Activated B cell treated with CpG ODN at 0.5 μM for 24 hours (primary cell): ENCODE measurements at regions of chr17 and their contacts with region 1.

Region 1: GRCh38 chr17:12545877-12546513 is 119.7 kb upstream of the MYOCD start:
- DNase-seq: no peak
- ATAC-seq: peak; percentile 78
- H3K4me3 Mint-ChIP-seq: no peak overlapping the region
- H3K27ac Mint-ChIP-seq: no peak overlapping the region
- H3K4me1 Mint-ChIP-seq: peaks cover 2% of the 10 kb centered on the region
- H3K27me3 Mint-ChIP-seq: no peaks in the 10 kb centered on the region
- CTCF ChIP-seq: no peak

Region 2: GRCh38 chr17:12342609-12343435 is 203.2 kb before region 1 on chr17:
- CTCF ChIA-PET with region 1: interaction called, 13 read pairs
- POLR2A ChIA-PET with region 1: no interaction called
- intact Hi-C with region 1: loop called (anchors 1 kb)
- DNase-seq: no peak
- ATAC-seq: peak; percentile 37
- H3K4me3 Mint-ChIP-seq: no peak overlapping the region
- H3K27ac Mint-ChIP-seq: no peak overlapping the region
- H3K4me1 Mint-ChIP-seq: no peaks in the 10 kb centered on the region
- H3K27me3 Mint-ChIP-seq: no peaks in the 10 kb centered on the region
- CTCF ChIP-seq: no peak

Region 3: GRCh38 chr17:12395733-12396354 is 150.2 kb before region 1 on chr17:
- CTCF ChIA-PET with region 1: interaction called, 9 read pairs
- POLR2A ChIA-PET with region 1: no interaction called
- intact Hi-C with region 1: loop called (anchors 2 kb)
- DNase-seq: no peak
- ATAC-seq: peak; percentile 47
- H3K4me3 Mint-ChIP-seq: no peak overlapping the region
- H3K27ac Mint-ChIP-seq: no peak overlapping the region
- H3K4me1 Mint-ChIP-seq: no peaks in the 10 kb centered on the region
- H3K27me3 Mint-ChIP-seq: no peaks in the 10 kb centered on the region
- CTCF ChIP-seq: no peak

Region 4: DNA sequence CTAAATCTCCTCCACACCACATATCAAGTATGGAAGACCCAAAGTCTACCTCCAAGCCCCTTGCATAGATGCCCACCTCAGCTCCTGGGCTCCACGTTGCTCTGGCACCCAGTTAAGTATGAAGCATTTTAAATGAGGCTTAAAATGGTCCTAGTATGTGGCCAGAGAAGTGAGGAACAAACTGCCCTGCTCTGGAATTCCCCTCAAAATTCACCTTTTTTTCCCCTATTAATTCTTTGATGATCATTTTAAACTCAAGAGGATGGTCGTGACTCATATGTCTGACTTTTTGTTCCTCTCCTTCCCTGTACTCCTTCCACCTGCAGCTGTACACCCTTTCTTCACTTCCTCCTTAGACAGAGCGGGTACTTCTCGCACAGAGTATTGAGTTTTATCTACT is 114.8 kb before region 1 on chr17:
- CTCF ChIA-PET with region 1: interaction called, 6 read pairs
- POLR2A ChIA-PET with region 1: no interaction called
- intact Hi-C with region 1: loop called (anchors 10 kb)
- DNase-seq: no peak
- ATAC-seq: peak; percentile 83
- H3K4me3 Mint-ChIP-seq: peak overlapping the region; percentile 59
- H3K27ac Mint-ChIP-seq: peak overlapping the region; percentile 95
- H3K4me1 Mint-ChIP-seq: peaks cover 66% of the 10 kb centered on the region
- H3K27me3 Mint-ChIP-seq: no peaks in the 10 kb centered on the region
- CTCF ChIP-seq: no peak

Region 5: DNA sequence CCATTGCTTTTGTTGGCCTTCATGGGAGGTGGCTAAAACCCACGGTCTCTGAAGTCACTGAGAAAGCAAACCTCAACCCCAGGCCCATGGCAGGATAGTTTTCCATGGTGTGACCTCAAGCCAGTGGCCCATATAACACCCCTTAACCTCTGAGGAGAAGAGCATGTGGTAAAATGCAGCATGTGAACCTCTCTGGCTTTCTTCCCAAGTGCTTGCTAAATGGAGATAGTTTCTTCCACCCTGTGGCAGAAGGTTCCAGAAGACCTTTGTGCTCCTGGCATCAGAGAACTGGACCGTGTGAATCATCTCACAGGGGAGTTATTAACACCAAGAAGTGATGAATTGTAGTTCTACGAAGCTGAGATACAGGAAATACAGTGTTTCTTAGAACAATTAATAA is 166.9 kb after region 1 on chr17:
- CTCF ChIA-PET with region 1: no interaction called
- POLR2A ChIA-PET with region 1: no interaction called
- intact Hi-C with region 1: no loop called
- DNase-seq: no peak
- ATAC-seq: no peak
- H3K4me3 Mint-ChIP-seq: no peak overlapping the region
- H3K27ac Mint-ChIP-seq: no peak overlapping the region
- H3K4me1 Mint-ChIP-seq: no peaks in the 10 kb centered on the region
- H3K27me3 Mint-ChIP-seq: peaks cover 10% of the 10 kb centered on the region
- CTCF ChIP-seq: no peak

Region 6: DNA sequence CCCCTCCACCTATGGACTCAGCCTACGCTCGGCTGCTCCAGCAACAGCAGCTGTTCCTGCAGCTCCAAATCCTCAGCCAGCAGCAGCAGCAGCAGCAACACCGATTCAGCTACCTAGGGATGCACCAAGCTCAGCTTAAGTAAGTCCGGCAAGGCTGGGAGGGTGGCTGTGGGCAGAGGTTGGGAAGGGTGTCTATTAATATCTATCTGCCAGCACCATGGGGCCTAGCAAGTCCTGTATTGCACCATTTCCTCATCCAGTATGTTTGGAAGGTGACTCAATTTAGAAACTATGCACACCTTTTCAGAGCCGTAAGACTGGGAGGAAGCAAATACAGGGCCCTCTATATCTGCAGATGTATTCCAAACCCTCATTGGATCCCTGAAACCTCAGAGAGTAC is 198.3 kb after region 1 on chr17:
- CTCF ChIA-PET with region 1: no interaction called
- POLR2A ChIA-PET with region 1: no interaction called
- intact Hi-C with region 1: loop called (anchors 5 kb)
- DNase-seq: no peak
- ATAC-seq: no peak
- H3K4me3 Mint-ChIP-seq: no peak overlapping the region
- H3K27ac Mint-ChIP-seq: no peak overlapping the region
- H3K4me1 Mint-ChIP-seq: no peaks in the 10 kb centered on the region
- H3K27me3 Mint-ChIP-seq: peaks cover 4% of the 10 kb centered on the region
- CTCF ChIP-seq: no peak

Region 7: GRCh38 chr17:13002766-13003451 is 456.9 kb after region 1 on chr17:
- CTCF ChIA-PET with region 1: interaction called, 14 read pairs
- POLR2A ChIA-PET with region 1: no interaction called
- intact Hi-C with region 1: loop called (anchors 1 kb)
- DNase-seq: peak; percentile 43
- ATAC-seq: peak; percentile 56
- H3K4me3 Mint-ChIP-seq: no peak overlapping the region
- H3K27ac Mint-ChIP-seq: no peak overlapping the region
- H3K4me1 Mint-ChIP-seq: no peaks in the 10 kb centered on the region
- H3K27me3 Mint-ChIP-seq: no peaks in the 10 kb centered on the region
- CTCF ChIP-seq: no peak